BJ (cell line): ENCODE measurements at regions of chr11 and their contacts with region 1.

Region 1: GRCh38 chr11:65418711-65419459 is 3.7 kb upstream of the NEAT1 start:
- DNase-seq: peak; percentile 92
- H3K4me3 ChIP-seq: peak overlapping the region; percentile 33
- H3K27me3 ChIP-seq: no peaks in the 10 kb centered on the region
- CTCF ChIP-seq: no peak

Region 2: GRCh38 chr11:65382033-65382807 is 36.7 kb before region 1 on chr11 and contains the start of gene SLC25A45:
- CTCF ChIA-PET with region 1: interaction called, 29 read pairs
- POLR2A ChIA-PET with region 1: interaction called, 6 read pairs
- DNase-seq: peak; percentile 94
- H3K4me3 ChIP-seq: peak within 1 kb of the TSS; percentile 33
- H3K27me3 ChIP-seq: no peaks in the 10 kb centered on the region
- CTCF ChIP-seq: peak; percentile 84
- polyA plus RNA-seq, gene SLC25A45: 1.1 and 2.1 TPM in 2 replicates

Region 3: GRCh38 chr11:65403607-65404121 is 15.2 kb before region 1 on chr11:
- CTCF ChIA-PET with region 1: interaction called, 53 read pairs
- POLR2A ChIA-PET with region 1: no interaction called
- DNase-seq: no peak
- H3K4me3 ChIP-seq: no peak overlapping the region
- H3K27me3 ChIP-seq: no peaks in the 10 kb centered on the region
- CTCF ChIP-seq: no peak

Region 4: DNA sequence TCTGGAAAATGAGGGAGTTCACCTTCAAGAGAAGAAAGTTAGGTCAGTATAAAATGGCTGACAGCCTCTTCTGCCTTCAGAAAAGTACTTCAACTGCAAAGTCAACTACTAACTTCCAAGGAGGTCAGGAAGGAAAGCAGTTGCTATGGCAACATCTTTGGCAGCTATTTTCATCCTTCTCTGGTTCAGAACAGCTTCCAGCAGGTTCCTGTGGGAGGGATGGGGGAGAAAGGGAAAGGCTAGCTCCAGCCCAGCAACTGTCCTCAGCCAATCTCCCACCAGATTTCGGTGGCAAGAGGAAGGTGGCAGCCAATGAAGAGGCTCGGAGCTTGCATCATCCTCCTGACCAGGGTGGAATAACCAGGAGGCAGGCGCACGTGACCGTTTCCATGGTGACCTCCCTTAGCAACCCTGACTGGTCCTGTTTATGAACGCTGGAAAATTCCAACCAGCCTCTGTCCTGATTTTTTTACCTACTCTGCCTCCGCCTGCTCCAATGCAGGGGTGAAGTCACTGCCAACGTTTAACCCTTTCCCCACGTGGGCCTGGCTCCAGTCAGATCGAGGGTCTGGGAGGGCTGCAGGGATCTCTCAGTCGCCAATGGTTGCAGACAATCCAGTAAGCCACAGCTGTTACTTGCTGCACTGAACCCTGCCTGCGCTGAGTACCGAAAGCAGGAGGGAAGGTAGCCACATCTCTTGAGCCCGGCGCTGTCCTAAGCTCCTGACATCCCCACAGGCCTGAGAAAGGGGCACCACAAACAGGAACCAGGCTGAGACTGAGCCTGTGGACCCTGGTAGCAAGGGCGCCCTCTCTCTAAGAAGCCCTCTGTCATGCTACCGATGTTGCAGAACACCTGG is 68.8 kb after region 1 on chr11:
- CTCF ChIA-PET with region 1: interaction called, 8 read pairs
- POLR2A ChIA-PET with region 1: interaction called, 38 read pairs
- DNase-seq: peak; percentile 100
- H3K4me3 ChIP-seq: 0 out of 2 replicates have a peak overlapping the region, but pooled peaks have one; percentile 10
- H3K27me3 ChIP-seq: no peaks in the 10 kb centered on the region
- CTCF ChIP-seq: no peak

Region 5: DNA sequence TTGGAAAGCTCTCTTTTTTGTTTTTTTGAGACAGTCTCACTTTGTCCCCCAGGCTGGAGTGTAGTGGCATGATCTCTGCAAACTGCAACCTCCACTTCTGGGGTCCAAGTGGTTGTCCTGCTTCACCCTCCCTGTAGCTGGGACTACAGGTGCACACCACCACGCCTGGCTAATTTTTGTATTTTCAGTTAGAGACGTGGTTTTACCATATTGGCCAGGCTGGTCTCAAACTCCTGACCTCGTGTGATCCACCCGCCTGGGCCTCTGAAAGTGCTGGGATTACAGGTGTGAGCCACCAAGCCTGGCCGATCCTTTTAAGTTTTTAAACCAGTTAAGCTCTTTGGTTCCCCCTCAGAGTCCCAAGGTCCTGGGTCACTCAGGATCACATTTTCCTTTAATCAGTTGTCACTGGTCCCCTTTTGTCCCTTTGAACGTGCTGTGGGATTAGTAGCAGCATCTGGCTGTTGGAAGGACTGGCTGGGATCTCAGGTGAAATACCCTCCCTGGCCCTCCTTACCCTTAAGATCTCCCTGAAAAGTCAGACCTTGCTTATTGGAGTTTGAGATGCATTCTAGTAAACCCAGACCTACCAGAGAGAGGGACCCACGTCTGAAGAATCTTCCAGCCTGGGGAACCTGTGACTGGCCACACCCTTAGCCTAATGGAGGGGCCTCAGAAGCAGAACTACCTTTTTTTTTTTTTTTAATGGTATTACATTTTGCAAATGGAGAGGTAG is 88.1 kb after region 1 on chr11:
- CTCF ChIA-PET with region 1: interaction called, 128 read pairs
- POLR2A ChIA-PET with region 1: interaction called, 204 read pairs
- DNase-seq: no peak
- H3K4me3 ChIP-seq: peak overlapping the region; percentile 76
- H3K27me3 ChIP-seq: no peaks in the 10 kb centered on the region
- CTCF ChIP-seq: no peak